ENCODE measurements at regions of chr4 and their contacts with region 1.

Region 1: DNA sequence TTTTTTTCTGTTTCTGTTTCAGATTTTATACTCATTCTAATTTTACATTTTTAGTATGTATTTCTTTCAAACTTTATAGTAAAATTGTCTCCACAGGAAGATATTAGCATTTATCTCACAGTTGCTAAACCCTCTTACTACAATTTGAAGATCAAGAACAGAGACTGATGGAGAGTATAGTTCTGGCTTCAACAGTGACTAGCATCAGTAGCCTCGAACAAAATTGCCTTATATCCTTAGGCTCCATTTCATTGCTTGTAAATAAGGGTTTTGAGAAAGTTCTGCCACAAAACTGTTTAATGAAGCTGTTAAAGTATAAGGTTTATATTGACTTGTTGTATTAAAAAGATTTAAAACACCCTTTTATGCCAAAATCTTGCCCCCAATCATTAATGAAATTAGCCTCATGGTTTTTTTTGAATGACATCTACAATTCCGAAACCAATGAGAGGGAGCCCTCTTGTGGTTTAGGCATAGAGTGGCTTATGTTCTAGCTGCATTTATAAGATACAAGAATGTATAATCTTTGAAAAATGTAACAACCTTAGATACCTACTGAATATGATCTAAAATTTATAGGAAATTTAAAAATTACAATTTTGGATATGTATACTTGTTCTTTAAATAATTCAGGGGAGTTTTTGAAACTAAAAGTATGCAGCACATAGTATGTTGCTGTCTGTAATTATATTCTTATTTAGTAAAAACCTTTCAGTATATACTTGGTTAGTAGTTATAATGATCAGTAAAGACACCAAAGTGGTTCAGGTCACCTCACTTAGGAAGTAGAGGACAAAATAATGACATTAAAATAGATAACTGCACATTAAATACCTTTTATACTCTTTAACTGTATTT is 109.8 kb upstream of the HPGD start:
- DNase-seq: no peak
- ATAC-seq: peak; percentile 83
- H3K4me3 ChIP-seq: no peak overlapping the region
- H3K27ac ChIP-seq: no peak overlapping the region
- H3K4me1 ChIP-seq: no peaks in the 10 kb centered on the region
- H3K27me3 ChIP-seq: no peaks in the 10 kb centered on the region; a peak in 1 of 4 replicates
- CTCF ChIP-seq: peak; percentile 52 to 62 (median 62); a peak in 5 of 6 replicates
- EP300 ChIP-seq: no peak
- POLR2A ChIP-seq: no peak
- RAD21 ChIP-seq: peak; percentile 77

Region 2: GRCh38 chr4:174365018-174365587 is 267.0 kb before region 1 on chr4:
- CTCF ChIA-PET with region 1: interaction called, 11 read pairs
- POLR2A ChIA-PET with region 1: no interaction called
- RAD21 ChIA-PET with region 1: interaction called, 8 read pairs
- SMC1A ChIA-PET with region 1: interaction called, 7 read pairs
- in situ Hi-C with region 1: loop called (anchors 10 kb)
- intact Hi-C with region 1: loop called (anchors 1 kb)
- DNase-seq: no peak
- ATAC-seq: no peak
- H3K4me3 ChIP-seq: no peak overlapping the region
- H3K27ac ChIP-seq: no peak overlapping the region
- H3K4me1 ChIP-seq: no peaks in the 10 kb centered on the region
- H3K27me3 ChIP-seq: no peaks in the 10 kb centered on the region
- CTCF ChIP-seq: peak in 2 of 3 experiments; percentile 24 to 45; a peak in 3 of 6 replicates
- EP300 ChIP-seq: no peak
- POLR2A ChIP-seq: no peak
- RAD21 ChIP-seq: peak; percentile 78

Region 3: DNA sequence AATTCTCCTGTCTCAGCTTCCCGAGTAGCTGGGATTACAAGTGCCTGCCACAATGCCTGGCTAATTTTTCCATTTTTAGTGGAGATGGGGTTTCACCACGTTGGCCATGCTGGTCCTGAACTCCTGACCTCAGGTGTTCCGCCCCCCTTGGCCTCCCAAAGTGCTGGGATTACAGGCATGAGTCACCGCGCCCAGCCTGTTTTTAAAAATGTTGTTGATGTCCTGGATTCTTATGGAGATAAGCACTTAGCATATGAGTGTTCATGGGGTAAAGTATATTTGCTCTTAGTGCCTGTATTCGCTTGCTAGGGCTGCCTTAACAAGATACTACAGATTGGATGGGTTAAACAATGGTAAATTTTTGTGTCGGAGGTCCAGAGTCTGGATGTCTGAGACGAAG is 256.7 kb before region 1 on chr4:
- CTCF ChIA-PET with region 1: interaction called, 5 read pairs
- POLR2A ChIA-PET with region 1: no interaction called
- RAD21 ChIA-PET with region 1: interaction called, 10 read pairs
- SMC1A ChIA-PET with region 1: interaction called, 12 read pairs
- in situ Hi-C with region 1: no loop called
- intact Hi-C with region 1: no loop called
- DNase-seq: no peak
- ATAC-seq: no peak
- H3K4me3 ChIP-seq: no peak overlapping the region
- H3K27ac ChIP-seq: no peak overlapping the region
- H3K4me1 ChIP-seq: no peaks in the 10 kb centered on the region
- H3K27me3 ChIP-seq: no peaks in the 10 kb centered on the region
- CTCF ChIP-seq: no peak
- EP300 ChIP-seq: no peak
- POLR2A ChIP-seq: no peak
- RAD21 ChIP-seq: no peak

Region 4: GRCh38 chr4:174522183-174523048 is 109.7 kb before region 1 on chr4 and contains the start of gene HPGD:
- CTCF ChIA-PET with region 1: no interaction called
- POLR2A ChIA-PET with region 1: no interaction called
- RAD21 ChIA-PET with region 1: no interaction called
- SMC1A ChIA-PET with region 1: no interaction called
- in situ Hi-C with region 1: no loop called
- intact Hi-C with region 1: loop called (anchors 5 kb)
- DNase-seq: no peak
- ATAC-seq: peak; percentile 88
- H3K4me3 ChIP-seq: peak within 1 kb of the TSS; percentile 23; the same call in 1 of the 2 replicates
- H3K27ac ChIP-seq: no peak within 1 kb of the TSS
- H3K4me1 ChIP-seq: no peaks in the 10 kb centered on the region
- H3K27me3 ChIP-seq: peaks cover 9 to 11% of the 10 kb centered on the region in 2 experiments
- CTCF ChIP-seq: no peak
- EP300 ChIP-seq: no peak
- POLR2A ChIP-seq: no peak
- RAD21 ChIP-seq: no peak
- polyA plus RNA-seq, gene HPGD: not detected

Region 5: GRCh38 chr4:174714393-174715211 is 82.5 kb after region 1 on chr4:
- CTCF ChIA-PET with region 1: interaction called, 3 read pairs
- POLR2A ChIA-PET with region 1: no interaction called
- RAD21 ChIA-PET with region 1: no interaction called
- SMC1A ChIA-PET with region 1: interaction called, 3 read pairs
- in situ Hi-C with region 1: no loop called
- intact Hi-C with region 1: loop called (anchors 5 kb)
- DNase-seq: no peak
- ATAC-seq: peak; percentile 90
- H3K4me3 ChIP-seq: no peak overlapping the region
- H3K27ac ChIP-seq: no peak overlapping the region
- H3K4me1 ChIP-seq: no peaks in the 10 kb centered on the region
- H3K27me3 ChIP-seq: 0 out of 4 replicates have a peak, but pooled peaks cover 0 to 4% of the 10 kb centered on the region in 2 experiments
- CTCF ChIP-seq: peak; percentile 74 to 80 (median 75)
- EP300 ChIP-seq: no peak
- POLR2A ChIP-seq: no peak
- RAD21 ChIP-seq: peak; percentile 56

Measured in GM12878 (cell line).